ENCODE measurements at regions of chr3 and their contacts with region 1.

Region 1: GRCh38 chr3:188954590-188955208 is 217.1 kb upstream of the TPRG1 start:
- DNase-seq: peak; percentile 71

Region 2: GRCh38 chr3:187738331-187739093 is 1216.2 kb before region 1 on chr3:
- CTCF ChIA-PET with region 1: interaction called, 60 read pairs
- POLR2A ChIA-PET with region 1: no interaction called
- DNase-seq: peak; percentile 68